Heart left ventricle (tissue), 16 donors: ENCODE measurements at regions of chr9 and their contacts with region 1.

Region 1: DNA sequence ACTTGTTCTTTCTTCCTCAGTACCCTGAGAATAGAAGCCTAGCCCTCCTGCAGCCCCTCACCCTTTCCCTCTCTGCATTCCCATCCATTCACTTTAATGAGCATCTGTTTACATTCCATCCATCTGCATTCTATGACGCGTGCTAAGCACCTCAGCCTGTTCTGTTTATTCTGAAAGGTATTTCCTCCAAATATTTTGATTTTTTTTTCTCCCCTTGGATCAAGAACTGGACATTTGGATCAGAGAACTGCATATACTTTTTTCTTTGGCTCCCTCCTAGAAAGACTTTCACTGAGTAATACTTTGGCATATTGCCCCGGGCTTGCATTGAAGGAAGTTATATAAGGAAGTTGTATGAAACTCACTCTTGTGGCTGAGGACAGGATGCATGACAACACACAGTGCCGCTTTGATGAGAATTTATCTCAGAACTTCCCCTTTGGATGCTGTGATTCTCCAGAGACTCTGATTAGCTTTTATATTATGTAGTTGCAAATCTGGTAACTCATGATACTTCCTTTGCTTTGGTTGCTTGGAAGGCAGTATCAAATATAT is 15.8 kb downstream of the TMEM8B start:
- DNase-seq: peak in 3 of 5 donors; percentile 59 to 73 (median 70)
- ATAC-seq: peak in 3 of 4 donors; percentile 56 to 88 (median 58)
- H3K4me3 ChIP-seq: no peak overlapping the region
- H3K27ac ChIP-seq: peak overlapping the region in 10 of 12 donors; percentile 33 to 68 (median 38)
- H3K4me1 ChIP-seq: peaks cover 0 to 68% (median 26%) of the 10 kb centered on the region in 12 donors
- H3K27me3 ChIP-seq: peaks cover 0 to 26% (median 0%) of the 10 kb centered on the region in 9 donors
- CTCF ChIP-seq: no peak
- POLR2A ChIP-seq: no peak

Region 2: DNA sequence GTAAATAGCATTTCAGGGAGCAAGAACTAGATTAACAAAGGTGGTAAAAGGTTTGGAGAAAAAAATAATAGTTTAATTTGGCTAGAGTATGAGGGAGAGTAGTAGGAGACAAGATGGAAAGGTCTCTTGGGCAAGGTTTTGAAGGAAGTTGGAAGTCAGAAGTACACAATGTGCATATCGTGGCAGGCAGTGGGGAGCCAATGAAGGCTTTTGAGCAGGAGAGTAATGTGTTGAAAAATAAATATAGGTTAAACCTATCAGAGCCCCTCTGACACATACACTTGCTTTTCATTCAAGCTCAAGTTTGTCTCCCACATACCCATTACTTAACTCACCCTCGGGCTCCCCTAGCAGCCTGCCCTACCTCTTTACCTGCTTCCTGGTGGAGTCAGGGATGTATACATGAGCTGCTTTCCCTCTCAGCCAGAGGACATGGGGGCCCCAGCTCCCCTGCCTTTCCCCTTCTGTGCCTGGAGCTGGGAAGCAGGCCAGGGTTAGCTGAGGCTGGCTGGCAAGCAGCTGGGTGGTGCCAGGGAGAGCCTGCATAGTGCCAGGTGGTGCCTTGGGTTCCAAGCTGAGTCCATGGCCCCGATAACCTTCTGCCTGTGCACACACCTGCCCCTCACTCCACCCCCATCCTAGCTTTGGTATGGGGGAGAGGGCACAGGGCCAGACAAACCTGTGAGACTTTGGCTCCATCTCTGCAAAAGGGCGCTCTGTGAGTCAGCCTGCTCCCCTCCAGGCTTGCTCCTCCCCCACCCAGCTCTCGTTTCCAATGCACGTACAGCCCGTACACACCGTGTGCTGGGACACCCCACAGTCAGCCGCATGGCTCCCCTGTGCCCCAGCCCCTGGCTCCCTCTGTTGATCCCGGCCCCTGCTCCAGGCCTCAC is 171.4 kb before region 1 on chr9 and contains the start of gene CA9:
- intact Hi-C with region 1: no loop called
- DNase-seq: peak in 3 of 5 donors; percentile 67 to 72 (median 70)
- ATAC-seq: peak; percentile 70 to 88 (median 82)
- H3K4me3 ChIP-seq: no peak within 1 kb of the TSS
- H3K27ac ChIP-seq: peak within 1 kb of the TSS in 2 of 12 donors; percentile 9 to 30
- H3K4me1 ChIP-seq: peaks cover 0 to 21% (median 11%) of the 10 kb centered on the region in 12 donors
- H3K27me3 ChIP-seq: peaks cover 0 to 8% (median 0%) of the 10 kb centered on the region in 9 donors
- CTCF ChIP-seq: no peak
- POLR2A ChIP-seq: no peak
- total RNA-seq, gene CA9: 0.47 to 13.9 (median 2.3) TPM in 3 of 9 donors, not detected in the others

Region 3: GRCh38 chr9:35801328-35802128 is 43.3 kb before region 1 on chr9:
- intact Hi-C with region 1: loop called in 1 of 10 experiments (anchors 5 kb)
- DNase-seq: no peak
- ATAC-seq: no peak
- H3K4me3 ChIP-seq: no peak overlapping the region
- H3K27ac ChIP-seq: no peak overlapping the region
- H3K4me1 ChIP-seq: peaks cover 0 to 6% (median 0%) of the 10 kb centered on the region in 12 donors
- H3K27me3 ChIP-seq: no peaks in the 10 kb centered on the region
- CTCF ChIP-seq: no peak
- POLR2A ChIP-seq: no peak